ENCODE measurements at regions of chr10 and their contacts with region 1.

Region 1: GRCh38 chr10:31707093-31708039 is 221.3 kb downstream of the ARHGAP12 start:
- DNase-seq: peak; percentile 81
- ATAC-seq: peak; percentile 95
- H3K4me3 Mint-ChIP-seq: no peak overlapping the region
- H3K27ac Mint-ChIP-seq: peak overlapping the region; percentile 83
- H3K4me1 Mint-ChIP-seq: peaks cover 24% of the 10 kb centered on the region
- H3K27me3 Mint-ChIP-seq: no peaks in the 10 kb centered on the region

Region 2: DNA sequence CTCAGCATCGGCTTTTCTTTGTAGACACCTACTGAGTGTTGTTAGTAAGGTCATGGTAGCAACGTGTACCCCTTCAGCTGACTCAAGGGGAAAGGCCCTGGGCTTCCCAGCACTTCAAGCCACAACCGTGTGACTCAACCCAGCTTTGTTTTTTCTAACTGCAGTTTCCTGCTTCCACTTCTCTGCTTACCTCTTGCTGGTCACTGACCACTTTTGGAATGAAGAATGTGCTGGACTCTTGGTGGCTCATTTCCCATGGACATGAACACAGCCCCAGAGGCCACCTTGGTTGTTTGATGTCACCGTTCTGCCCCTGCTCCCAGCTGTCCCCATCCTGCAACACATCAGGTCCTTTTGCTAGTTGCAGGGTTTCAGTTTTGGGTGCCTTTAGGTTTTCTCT is 606.2 kb before region 1 on chr10:
- CTCF ChIA-PET with region 1: no interaction called
- POLR2A ChIA-PET with region 1: interaction called, 14 read pairs
- intact Hi-C with region 1: no loop called
- DNase-seq: peak; percentile 86
- ATAC-seq: peak; percentile 96
- H3K4me3 Mint-ChIP-seq: no peak overlapping the region
- H3K27ac Mint-ChIP-seq: peak overlapping the region; percentile 91
- H3K4me1 Mint-ChIP-seq: peaks cover 44% of the 10 kb centered on the region
- H3K27me3 Mint-ChIP-seq: no peaks in the 10 kb centered on the region

Region 3: DNA sequence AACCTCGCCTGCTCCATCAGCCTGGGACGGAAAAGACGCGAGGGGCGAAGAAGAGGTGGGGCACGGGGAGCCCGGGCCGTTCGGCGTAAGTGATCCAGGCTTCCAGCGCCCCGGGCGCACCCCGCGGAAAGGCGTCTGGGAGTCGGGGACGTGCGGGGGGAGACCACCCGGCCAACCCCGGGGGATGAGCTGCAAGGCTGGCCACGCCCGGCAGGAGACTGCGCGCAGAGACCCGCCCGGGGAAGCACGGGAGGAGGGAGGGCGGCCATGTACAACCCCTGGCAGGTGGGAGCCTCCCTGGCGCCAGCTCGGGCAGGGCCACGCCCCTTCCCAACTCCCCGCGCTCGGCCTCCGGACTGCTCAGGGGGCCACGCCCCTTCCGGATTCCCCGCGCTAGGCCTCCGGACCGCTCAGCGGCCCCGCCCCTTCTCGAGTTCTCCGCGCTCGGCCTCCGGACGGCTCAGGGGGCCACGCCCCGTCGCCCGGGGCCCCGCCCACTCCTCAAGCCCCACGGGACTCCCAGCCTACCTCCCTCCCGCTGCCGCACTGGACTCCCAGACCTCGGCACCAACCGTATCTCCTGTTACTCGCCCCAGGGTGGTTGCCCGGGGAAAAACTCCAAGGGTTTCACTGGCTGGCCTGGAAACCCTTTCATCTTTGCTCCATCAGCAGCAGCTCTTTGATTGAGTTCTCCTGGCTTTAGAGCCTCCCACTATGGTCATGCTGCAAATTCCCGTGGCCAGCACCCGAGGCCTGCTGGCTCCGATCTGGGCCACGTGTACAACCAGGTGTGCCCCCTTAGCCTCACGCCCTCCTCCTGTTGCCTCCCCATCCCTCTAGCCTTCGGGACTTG is 103.9 kb before region 1 on chr10:
- CTCF ChIA-PET with region 1: no interaction called
- POLR2A ChIA-PET with region 1: no interaction called
- intact Hi-C with region 1: loop called in 1 of 2 experiments (anchors 1 kb)
- DNase-seq: peak; percentile 94
- ATAC-seq: peak; percentile 92
- H3K4me3 Mint-ChIP-seq: peak overlapping the region; percentile 76
- H3K27ac Mint-ChIP-seq: peak overlapping the region; percentile 17
- H3K4me1 Mint-ChIP-seq: peaks cover 33% of the 10 kb centered on the region
- H3K27me3 Mint-ChIP-seq: peaks cover 2% of the 10 kb centered on the region

Region 4: DNA sequence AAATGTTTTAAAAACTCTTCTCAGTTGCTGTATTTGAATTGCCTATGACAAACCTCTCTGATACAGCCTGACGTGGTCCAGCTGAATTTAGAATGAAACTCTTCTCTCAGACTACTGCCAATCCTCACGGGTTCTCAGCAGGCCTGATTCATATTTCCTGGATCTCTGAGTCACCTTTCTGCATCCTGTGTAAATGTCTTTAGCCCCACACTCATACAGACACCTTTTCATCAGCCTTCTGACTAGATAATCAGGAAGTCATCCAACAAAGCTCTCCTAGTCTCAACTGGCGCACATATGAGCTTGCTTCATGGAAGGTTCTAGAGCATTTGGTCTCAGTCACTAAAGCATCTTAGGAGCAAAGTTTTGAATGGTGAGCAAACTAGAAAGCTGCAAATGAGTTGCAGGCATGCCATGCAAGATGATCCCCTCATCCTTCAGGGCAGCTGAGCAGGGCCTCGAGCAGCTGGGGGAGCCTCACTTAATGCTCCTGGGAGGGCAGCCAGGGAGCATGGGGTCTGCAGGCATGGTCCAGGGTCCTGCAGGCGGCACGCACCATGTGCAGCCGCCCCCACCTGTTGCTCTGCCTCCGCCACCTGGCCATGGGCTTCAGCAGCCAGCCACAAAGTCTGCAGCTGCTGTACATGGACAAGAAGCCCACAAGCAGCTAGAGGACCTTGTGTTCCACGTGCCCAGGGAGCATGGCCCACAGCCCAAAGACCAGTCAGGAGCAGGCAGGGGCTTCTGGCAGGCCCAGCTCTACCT is 38.4 kb after region 1 on chr10:
- CTCF ChIA-PET with region 1: interaction called, 4 read pairs
- POLR2A ChIA-PET with region 1: interaction called, 12 read pairs
- intact Hi-C with region 1: loop called (anchors 1 kb)
- DNase-seq: peak; percentile 75
- ATAC-seq: peak; percentile 98
- H3K4me3 Mint-ChIP-seq: no peak overlapping the region
- H3K27ac Mint-ChIP-seq: peak overlapping the region; percentile 91
- H3K4me1 Mint-ChIP-seq: peaks cover 34% of the 10 kb centered on the region
- H3K27me3 Mint-ChIP-seq: no peaks in the 10 kb centered on the region

Region 5: GRCh38 chr10:31759799-31760626 is 52.6 kb after region 1 on chr10:
- CTCF ChIA-PET with region 1: interaction called, 3 read pairs
- POLR2A ChIA-PET with region 1: no interaction called
- intact Hi-C with region 1: loop called (anchors 1 kb)
- DNase-seq: peak; percentile 97
- ATAC-seq: peak; percentile 94
- H3K4me3 Mint-ChIP-seq: peak overlapping the region; percentile 91
- H3K27ac Mint-ChIP-seq: peak overlapping the region; percentile 94
- H3K4me1 Mint-ChIP-seq: peaks cover 15% of the 10 kb centered on the region
- H3K27me3 Mint-ChIP-seq: no peaks in the 10 kb centered on the region